ENCODE measurements at regions of chr11 and their contacts with region 1.

Region 1: GRCh38 chr11:85810871-85811611 is at the start of gene SYTL2:
- DNase-seq: peak; percentile 58 to 84 (median 73)
- ATAC-seq: peak; percentile 88 to 94 (median 92)
- H3K4me3 ChIP-seq: peak within 1 kb of the TSS; percentile 86 to 87
- H3K4me3 Mint-ChIP-seq: peak within 1 kb of the TSS; percentile 89 to 92 (median 91)
- H3K27ac ChIP-seq: peak within 1 kb of the TSS; percentile 62
- H3K27ac Mint-ChIP-seq: peak within 1 kb of the TSS; percentile 83 to 91
- H3K4me1 ChIP-seq: peaks cover 14 to 31% of the 10 kb centered on the region in 2 experiments
- H3K4me1 Mint-ChIP-seq: peaks cover 32 to 51% (median 50%) of the 10 kb centered on the region in 3 donors
- H3K27me3 ChIP-seq: peaks cover 0 to 11% of the 10 kb centered on the region in 2 experiments
- H3K27me3 Mint-ChIP-seq: no peaks in the 10 kb centered on the region
- total RNA-seq, gene SYTL2: 19.8 to 85.4 (median 31.3) TPM

Region 2: DNA sequence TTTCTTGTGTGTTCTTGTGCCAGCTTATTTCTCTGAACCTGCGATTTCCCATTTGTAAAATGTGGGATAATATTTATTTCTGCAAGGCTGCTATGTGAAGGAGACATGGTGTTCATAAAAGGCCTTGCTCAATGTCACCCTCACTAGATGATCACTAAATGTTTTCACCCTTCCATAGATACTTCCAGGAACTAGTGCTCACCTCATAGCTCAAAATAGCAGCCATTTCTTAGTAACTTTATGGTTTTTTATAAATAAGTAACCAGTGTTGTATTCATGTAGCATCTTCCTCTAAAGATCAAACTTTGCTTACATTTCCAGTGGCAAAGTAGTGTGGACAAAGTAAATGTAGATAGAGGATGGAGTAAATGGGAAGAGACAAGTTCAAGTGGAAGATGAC is 23.9 kb before region 1 on chr11:
- CTCF ChIA-PET with region 1: interaction called in 1 of 2 experiments, 4 read pairs
- POLR2A ChIA-PET with region 1: interaction called, 4 to 10 read pairs
- DNase-seq: no peak
- ATAC-seq: no peak
- H3K4me3 ChIP-seq: no peak overlapping the region
- H3K4me3 Mint-ChIP-seq: no peak overlapping the region
- H3K27ac ChIP-seq: no peak overlapping the region
- H3K27ac Mint-ChIP-seq: no peak overlapping the region
- H3K4me1 ChIP-seq: peaks cover 3 to 5% of the 10 kb centered on the region in 2 experiments
- H3K4me1 Mint-ChIP-seq: peaks cover 34 to 48% (median 36%) of the 10 kb centered on the region in 3 donors
- H3K27me3 ChIP-seq: no peaks in the 10 kb centered on the region
- H3K27me3 Mint-ChIP-seq: no peaks in the 10 kb centered on the region

Region 3: DNA sequence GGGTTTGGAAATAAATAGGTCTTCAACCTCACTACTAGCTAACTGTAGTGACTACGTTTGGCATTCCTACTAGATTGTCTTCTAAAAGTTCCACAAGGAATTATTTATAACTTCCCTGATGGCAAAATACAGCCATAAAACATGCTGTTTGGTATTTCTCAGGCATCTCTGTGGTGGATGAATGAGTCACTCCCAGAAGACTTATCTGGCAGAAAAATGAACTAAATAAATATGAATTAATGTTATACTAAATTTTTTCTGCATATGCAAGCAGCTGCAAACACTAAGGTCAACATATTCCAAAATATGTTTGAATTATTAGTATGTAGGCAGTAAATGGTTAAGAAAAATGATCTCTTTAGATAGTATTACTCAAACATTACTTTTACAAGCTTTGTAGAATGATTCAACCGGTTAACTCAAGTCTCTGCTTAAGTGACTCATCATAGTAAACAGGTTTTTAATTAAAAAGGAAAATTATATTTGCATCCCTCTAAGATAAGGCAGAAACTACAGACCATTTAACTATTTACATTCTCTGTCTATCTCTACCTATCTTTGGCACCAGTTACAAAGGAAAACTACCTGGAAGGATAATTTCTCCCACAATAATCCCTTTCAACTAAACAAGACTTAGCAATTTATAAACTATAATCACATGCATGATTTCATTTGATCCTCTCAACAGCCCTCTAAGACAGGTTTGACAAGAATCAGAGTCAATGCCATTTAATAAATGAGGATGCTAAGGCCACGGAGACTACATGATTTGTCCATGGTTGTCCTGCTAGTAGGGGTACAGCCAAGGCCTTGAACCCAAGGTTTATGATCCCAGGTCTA is 17.2 kb after region 1 on chr11:
- CTCF ChIA-PET with region 1: interaction called, 7 to 11 read pairs
- POLR2A ChIA-PET with region 1: interaction called, 4 to 6 read pairs
- DNase-seq: no peak
- ATAC-seq: no peak
- H3K4me3 ChIP-seq: no peak overlapping the region
- H3K4me3 Mint-ChIP-seq: no peak overlapping the region
- H3K27ac ChIP-seq: peak overlapping the region; percentile 67
- H3K27ac Mint-ChIP-seq: peak overlapping the region in 1 of 2 donors; percentile 85
- H3K4me1 ChIP-seq: peaks cover 36% of the 10 kb centered on the region in 2 experiments
- H3K4me1 Mint-ChIP-seq: peaks cover 52 to 56% (median 52%) of the 10 kb centered on the region in 3 donors
- H3K27me3 ChIP-seq: no peaks in the 10 kb centered on the region
- H3K27me3 Mint-ChIP-seq: no peaks in the 10 kb centered on the region